Spleen (tissue), 13 donors: ENCODE measurements at regions of chr11 and their contacts with region 1.

Region 1: DNA sequence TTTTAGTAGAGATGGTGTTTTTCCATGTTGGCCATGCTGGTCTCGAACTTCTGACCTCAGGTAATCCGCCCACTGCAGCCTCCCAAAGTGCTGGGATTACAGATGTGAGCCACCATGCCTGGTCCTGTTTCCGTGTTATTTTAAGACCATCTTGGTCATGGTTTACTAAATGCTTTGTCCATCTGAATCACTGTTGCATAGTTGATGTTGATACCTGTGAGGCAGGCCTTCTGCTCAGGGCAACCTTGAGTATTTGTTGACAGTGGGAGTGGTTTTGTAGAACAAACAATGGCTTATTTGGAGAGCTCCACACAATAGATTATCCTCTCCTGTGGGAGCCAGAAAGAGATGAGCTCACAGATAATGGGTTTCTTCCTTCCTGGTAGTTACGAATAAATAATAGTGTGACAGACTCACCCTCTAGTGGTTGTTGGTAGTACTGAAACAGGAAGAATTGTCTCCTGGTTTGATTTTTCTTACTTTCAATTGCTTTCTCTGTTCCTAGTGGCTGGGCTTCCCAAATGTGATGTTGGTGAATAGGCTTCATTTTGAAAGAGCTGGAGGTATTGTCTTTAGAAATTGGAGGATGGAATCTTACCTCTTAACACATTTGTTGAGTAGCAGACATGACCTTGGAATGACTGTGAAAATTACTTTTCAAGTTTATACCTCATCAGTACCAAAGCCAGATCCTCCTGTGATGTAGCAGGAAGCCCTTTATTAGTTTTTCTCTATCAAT is 39.0 kb downstream of the CTNND1 start:
- DNase-seq: no peak
- H3K4me3 ChIP-seq: no peak overlapping the region
- H3K27ac ChIP-seq: peak overlapping the region; percentile 10 to 83 (median 73)
- H3K4me1 ChIP-seq: peaks cover 33 to 65% (median 50%) of the 10 kb centered on the region in 6 donors
- H3K27me3 ChIP-seq: no peaks in the 10 kb centered on the region
- CTCF ChIP-seq: peak; percentile 67 to 97 (median 87)
- POLR2A ChIP-seq: no peak

Region 2: GRCh38 chr11:57758174-57758573 is 42.4 kb before region 1 on chr11:
- intact Hi-C with region 1: loop called (anchors 5 kb)
- DNase-seq: no peak
- H3K4me3 ChIP-seq: no peak overlapping the region
- H3K27ac ChIP-seq: no peak overlapping the region
- H3K4me1 ChIP-seq: peaks cover 0 to 29% (median 0%) of the 10 kb centered on the region in 6 donors
- H3K27me3 ChIP-seq: no peaks in the 10 kb centered on the region
- CTCF ChIP-seq: no peak
- POLR2A ChIP-seq: no peak

Region 3: GRCh38 chr11:57936050-57936418 is 135.4 kb after region 1 on chr11:
- intact Hi-C with region 1: no loop called
- DNase-seq: no peak
- H3K4me3 ChIP-seq: no peak overlapping the region
- H3K27ac ChIP-seq: no peak overlapping the region
- H3K4me1 ChIP-seq: no peaks in the 10 kb centered on the region
- H3K27me3 ChIP-seq: peaks cover 0 to 4% (median 0%) of the 10 kb centered on the region in 7 donors
- CTCF ChIP-seq: no peak
- POLR2A ChIP-seq: no peak